GM10248 (cell line): ENCODE measurements at regions of chr5 and their contacts with region 1.

Region 1: GRCh38 chr5:44952376-44952775 is 143.6 kb downstream of the MRPS30 start:
- DNase-seq: peak; percentile 20
- CTCF ChIP-seq: peak; percentile 49

Region 2: DNA sequence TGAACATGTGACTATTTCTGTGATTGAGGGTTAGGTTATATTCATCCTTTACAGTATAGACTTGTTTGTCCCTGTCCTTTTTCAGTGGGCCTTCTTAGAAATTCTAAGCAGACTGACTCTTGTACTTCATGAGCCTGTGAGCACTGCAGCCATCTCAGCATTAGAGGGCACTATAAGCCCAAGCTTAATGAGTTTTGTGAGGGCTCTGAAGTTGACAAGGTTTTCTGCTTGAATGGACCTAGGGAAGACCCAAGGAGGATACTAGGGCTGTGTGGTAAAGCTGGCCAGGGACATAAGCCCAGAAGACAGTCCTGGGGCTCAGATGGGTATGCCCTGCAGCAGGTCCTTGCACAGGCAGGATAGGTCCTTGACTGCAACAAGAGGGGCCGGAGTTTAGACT is 17.1 kb before region 1 on chr5:
- CTCF ChIA-PET with region 1: interaction called, 10 read pairs
- POLR2A ChIA-PET with region 1: no interaction called
- DNase-seq: no peak
- CTCF ChIP-seq: peak; percentile 3

Region 3: DNA sequence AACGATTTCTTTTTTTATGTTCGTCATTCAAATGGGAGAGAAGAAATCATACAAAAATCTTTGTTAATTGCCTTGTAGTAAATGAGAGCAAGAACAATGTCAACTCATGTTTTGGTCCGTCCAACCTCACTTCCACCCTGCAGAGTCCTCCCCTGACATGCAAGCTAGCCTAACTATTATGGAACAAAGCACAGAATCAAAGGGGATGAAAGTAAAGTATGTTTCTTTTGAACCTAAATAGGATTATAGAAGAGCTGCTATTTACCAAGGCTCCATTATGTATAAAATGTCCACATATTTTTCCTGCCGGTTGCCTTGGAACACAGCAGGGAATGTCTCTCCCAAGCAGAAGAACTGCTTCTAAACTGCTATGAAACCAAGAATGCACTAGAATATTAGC is 17.4 kb after region 1 on chr5:
- CTCF ChIA-PET with region 1: interaction called, 18 read pairs
- POLR2A ChIA-PET with region 1: no interaction called
- DNase-seq: no peak
- CTCF ChIP-seq: no peak

Region 4: DNA sequence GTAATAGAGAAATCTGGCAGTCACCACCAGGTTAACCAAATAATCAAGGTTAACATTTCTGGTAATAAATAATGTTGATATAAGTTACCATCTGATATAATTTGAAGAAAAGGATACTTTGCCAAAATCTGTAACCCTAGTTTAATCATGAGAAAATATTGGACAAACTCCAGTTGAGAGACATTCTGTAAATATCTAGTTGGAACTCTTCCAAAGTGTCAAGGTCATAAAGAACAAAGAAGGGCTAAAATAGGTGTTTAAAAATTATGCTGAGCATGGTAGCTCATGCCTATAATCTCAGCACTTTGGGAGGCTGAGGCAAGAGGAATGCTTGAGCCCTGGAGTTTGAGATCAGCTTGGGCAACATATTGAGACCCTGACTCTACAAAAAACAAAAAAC is 109.7 kb after region 1 on chr5:
- CTCF ChIA-PET with region 1: no interaction called
- POLR2A ChIA-PET with region 1: no interaction called
- DNase-seq: no peak
- CTCF ChIP-seq: no peak

Region 5: GRCh38 chr5:45162974-45163373 is 210.6 kb after region 1 on chr5:
- CTCF ChIA-PET with region 1: no interaction called
- POLR2A ChIA-PET with region 1: no interaction called
- DNase-seq: no peak
- CTCF ChIP-seq: no peak